AG04449 (cell line): ENCODE measurements at regions of chr4 and their contacts with region 1.

Region 1: DNA sequence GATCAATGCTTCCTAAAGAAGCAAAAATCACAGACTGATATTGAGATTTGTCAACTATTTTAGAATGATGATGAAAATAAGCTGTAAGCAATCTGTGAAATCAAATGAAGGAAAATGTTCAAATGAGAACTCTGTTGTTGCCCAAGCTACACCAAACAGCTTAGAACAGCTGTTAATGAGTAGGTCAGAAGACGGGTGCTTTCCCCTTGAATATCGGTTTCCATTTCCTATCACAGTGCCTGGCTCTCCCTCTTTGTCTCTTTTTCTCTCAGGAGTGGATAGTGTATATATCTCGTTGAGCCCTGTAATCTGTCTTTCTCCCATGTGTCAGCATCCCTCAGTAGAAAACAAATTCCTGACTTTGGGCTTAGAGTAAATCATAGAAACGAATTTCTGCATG is 1592.9 kb upstream of the TENM3 start:
- DNase-seq: no peak
- H3K4me3 ChIP-seq: no peak overlapping the region
- CTCF ChIP-seq: no peak

Region 2: GRCh38 chr4:180636696-180637404 is 13.4 kb before region 1 on chr4:
- CTCF ChIA-PET with region 1: no interaction called
- POLR2A ChIA-PET with region 1: no interaction called
- DNase-seq: no peak
- H3K4me3 ChIP-seq: no peak overlapping the region
- CTCF ChIP-seq: no peak

Region 3: GRCh38 chr4:180664766-180665368 is 14.6 kb after region 1 on chr4:
- CTCF ChIA-PET with region 1: interaction called, 18 read pairs
- POLR2A ChIA-PET with region 1: no interaction called
- DNase-seq: peak; percentile 29
- H3K4me3 ChIP-seq: no peak overlapping the region
- CTCF ChIP-seq: peak; percentile 67